ENCODE measurements at regions of chr11 and their contacts with region 1.

Region 1: DNA sequence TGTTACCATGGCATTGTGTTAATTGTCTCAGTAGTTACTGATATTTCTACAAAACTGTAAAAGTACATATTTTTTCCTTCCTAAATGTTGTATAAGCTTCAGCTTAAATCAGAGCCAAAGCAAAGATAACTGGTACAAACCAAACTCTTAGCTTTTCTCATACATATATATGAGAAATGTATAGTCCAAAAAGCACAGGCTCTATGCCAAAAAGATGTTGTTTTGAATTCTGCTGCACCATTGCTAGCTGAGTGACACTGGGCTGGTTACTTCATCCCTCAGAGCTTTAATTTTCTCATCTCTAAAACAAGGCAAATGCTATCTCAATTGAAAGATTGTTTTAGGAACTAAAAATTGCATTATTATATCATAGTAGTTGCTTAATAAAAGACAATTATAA is 6.7 kb upstream of the GRIA4 start:
- DNase-seq: no peak
- ATAC-seq: no peak
- H3K4me3 ChIP-seq: no peak overlapping the region
- H3K27ac ChIP-seq: no peak overlapping the region
- H3K4me1 ChIP-seq: no peaks in the 10 kb centered on the region
- H3K27me3 ChIP-seq: peaks cover 0 to 8% (median 0%) of the 10 kb centered on the region in 9 donors
- CTCF ChIP-seq: no peak
- POLR2A ChIP-seq: no peak

Region 2: GRCh38 chr11:104637657-104638170 is 965.4 kb before region 1 on chr11:
- intact Hi-C with region 1: no loop called
- DNase-seq: no peak
- ATAC-seq: no peak
- H3K4me3 ChIP-seq: no peak overlapping the region
- H3K27ac ChIP-seq: no peak overlapping the region
- H3K4me1 ChIP-seq: peaks cover 0 to 5% (median 0%) of the 10 kb centered on the region in 12 donors
- H3K27me3 ChIP-seq: no peaks in the 10 kb centered on the region
- CTCF ChIP-seq: no peak
- POLR2A ChIP-seq: no peak

Region 3: GRCh38 chr11:105211806-105212531 is 391.2 kb before region 1 on chr11:
- intact Hi-C with region 1: loop called in 1 of 10 experiments (anchors 5 kb)
- DNase-seq: no peak
- ATAC-seq: no peak
- H3K4me3 ChIP-seq: no peak overlapping the region
- H3K27ac ChIP-seq: no peak overlapping the region
- H3K4me1 ChIP-seq: no peaks in the 10 kb centered on the region
- H3K27me3 ChIP-seq: no peaks in the 10 kb centered on the region
- CTCF ChIP-seq: no peak
- POLR2A ChIP-seq: no peak

Region 4: DNA sequence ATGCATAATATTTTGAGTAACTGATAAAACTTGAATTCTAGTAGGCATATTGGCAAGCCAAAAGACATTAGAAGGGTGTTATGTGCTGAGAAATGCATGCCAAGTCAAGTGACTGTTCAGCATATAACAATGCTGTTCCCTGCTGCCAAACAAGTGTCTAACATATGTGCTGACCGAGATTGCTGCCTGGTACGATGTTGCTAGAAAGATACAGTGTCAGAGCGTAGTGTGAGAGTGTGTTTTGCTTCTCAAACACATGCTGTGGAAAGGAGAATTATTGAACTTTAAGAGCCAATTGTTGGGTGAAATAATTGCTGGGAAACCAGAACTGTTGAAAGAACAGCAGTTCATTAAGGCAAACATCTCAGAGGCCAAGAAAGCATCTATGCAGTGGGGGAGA is 64.6 kb before region 1 on chr11:
- intact Hi-C with region 1: no loop called
- DNase-seq: no peak
- ATAC-seq: no peak
- H3K4me3 ChIP-seq: no peak overlapping the region
- H3K27ac ChIP-seq: no peak overlapping the region
- H3K4me1 ChIP-seq: no peaks in the 10 kb centered on the region
- H3K27me3 ChIP-seq: no peaks in the 10 kb centered on the region
- CTCF ChIP-seq: no peak
- POLR2A ChIP-seq: no peak

Region 5: GRCh38 chr11:105719073-105719822 is 116.1 kb after region 1 on chr11:
- intact Hi-C with region 1: no loop called
- DNase-seq: no peak
- ATAC-seq: no peak
- H3K4me3 ChIP-seq: no peak overlapping the region
- H3K27ac ChIP-seq: no peak overlapping the region
- H3K4me1 ChIP-seq: no peaks in the 10 kb centered on the region
- H3K27me3 ChIP-seq: no peaks in the 10 kb centered on the region
- CTCF ChIP-seq: no peak
- POLR2A ChIP-seq: no peak

Region 6: GRCh38 chr11:105986554-105986953 is 383.4 kb after region 1 on chr11:
- intact Hi-C with region 1: no loop called
- DNase-seq: no peak
- ATAC-seq: no peak
- H3K4me3 ChIP-seq: no peak overlapping the region
- H3K27ac ChIP-seq: no peak overlapping the region
- H3K4me1 ChIP-seq: no peaks in the 10 kb centered on the region
- H3K27me3 ChIP-seq: no peaks in the 10 kb centered on the region
- CTCF ChIP-seq: no peak
- POLR2A ChIP-seq: no peak

Measured in heart left ventricle (tissue), 16 donors.